Heart right ventricle (tissue), 16 donors: ENCODE measurements at regions of chr6 and their contacts with region 1.

Region 1: DNA sequence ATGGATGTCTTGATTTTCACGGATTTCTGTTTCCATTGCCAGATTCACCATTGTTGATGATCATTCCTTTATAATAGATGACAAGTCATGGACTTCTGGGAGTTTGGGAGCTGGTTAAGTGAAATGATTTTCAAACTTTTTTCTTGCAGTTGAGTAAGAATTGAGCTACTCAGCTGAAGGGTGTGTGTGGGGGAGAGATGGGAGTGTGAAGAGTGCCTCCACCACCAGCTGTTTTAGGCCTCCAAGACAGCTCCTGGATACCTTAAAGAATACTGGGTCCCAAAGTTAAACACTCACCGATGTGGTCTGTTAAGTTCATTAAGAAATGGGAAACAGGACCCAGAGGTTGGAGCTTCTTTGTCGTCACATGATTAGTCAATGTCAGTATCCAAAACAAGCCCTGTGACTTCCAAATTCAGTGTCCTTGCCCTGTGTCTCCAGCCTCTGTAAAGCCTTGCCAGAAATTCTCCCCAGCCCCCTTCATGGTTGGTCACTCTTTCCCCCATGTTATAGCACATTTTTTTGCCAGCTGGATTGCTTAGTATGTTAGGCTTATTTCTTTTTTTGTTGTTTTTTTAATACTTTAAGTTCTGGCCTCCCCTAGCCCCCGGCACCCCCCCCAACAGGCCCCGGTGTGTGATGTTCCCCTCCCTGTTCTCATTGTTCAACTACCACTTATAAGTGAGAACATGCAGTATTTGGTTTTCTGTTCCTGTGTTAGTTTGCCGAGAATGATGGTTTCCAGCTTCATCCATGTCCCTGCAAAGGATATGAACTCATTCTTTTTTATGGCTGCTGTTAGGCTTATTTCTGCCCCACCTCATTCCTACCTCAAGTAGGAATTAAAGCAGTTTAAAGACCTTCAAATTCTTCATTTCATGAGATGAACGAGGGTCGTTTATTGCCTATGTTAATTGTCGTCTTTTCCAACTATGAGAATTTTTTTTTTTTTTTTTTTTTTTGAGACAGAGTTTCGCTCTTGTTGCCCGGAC is 26.9 kb downstream of the BICRAL start:
- DNase-seq: no peak
- ATAC-seq: peak in 4 of 8 donors; percentile 29 to 66 (median 47)
- H3K4me3 ChIP-seq: no peak overlapping the region
- H3K27ac ChIP-seq: peak overlapping the region in 4 of 10 donors; percentile 8 to 43 (median 20)
- H3K4me1 ChIP-seq: peaks cover 0 to 32% (median 6%) of the 10 kb centered on the region in 9 donors
- H3K27me3 ChIP-seq: no peaks in the 10 kb centered on the region
- CTCF ChIP-seq: no peak

Region 2: DNA sequence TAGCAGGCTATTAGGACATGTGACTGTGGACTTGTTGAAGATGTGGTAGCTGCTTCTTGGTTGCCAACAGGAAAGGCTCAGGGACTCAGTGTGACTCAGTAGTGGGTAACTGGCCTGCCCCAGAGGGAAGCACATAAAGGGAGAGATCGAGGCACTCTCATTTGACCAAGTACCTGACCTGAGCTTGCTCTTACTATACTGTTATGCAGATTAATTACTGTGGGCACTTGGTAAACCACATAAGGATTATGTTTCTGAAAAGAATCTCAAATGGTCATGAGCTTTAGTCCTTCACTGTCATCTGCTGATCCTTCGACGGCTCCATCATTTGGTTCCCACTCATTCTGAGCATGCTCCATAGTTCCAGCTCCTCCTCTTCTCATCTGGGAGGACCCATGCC is 22.4 kb after region 1 on chr6:
- intact Hi-C with region 1: loop called in 1 of 10 experiments (anchors 1 kb)
- DNase-seq: no peak
- ATAC-seq: no peak
- H3K4me3 ChIP-seq: no peak overlapping the region
- H3K27ac ChIP-seq: no peak overlapping the region
- H3K4me1 ChIP-seq: no peaks in the 10 kb centered on the region
- H3K27me3 ChIP-seq: no peaks in the 10 kb centered on the region
- CTCF ChIP-seq: no peak